ENCODE measurements at regions of chr7 and their contacts with region 1.

Region 1: DNA sequence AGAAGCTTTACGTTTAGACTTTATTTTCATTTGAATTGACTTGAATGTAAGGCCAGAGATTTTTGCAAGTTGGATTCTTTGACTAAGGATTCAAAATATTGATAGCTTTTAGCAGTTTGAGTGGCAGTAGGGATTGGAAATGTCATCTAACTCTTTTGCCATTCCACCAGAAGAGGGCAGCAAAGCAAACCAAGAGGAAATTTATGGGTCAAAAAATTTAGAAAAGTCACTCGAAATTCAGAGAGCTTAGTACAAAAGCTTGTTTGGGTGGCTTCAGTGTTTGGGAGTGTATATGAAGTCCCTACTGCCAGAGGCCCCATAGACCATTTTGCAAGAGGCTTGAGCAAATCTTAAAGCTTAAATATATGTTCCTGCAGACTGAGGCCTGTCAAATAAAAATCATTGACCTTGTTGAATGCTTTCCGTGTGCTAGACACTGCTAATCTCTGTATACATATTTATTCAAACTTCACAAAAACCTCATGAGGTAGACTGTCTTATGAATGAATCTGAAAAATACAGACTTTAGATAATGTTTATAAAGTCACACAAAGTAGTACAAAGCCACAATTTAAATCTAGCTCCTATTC is 44.6 kb upstream of the RSBN1L start:
- DNase-seq: peak; percentile 61
- H3K4me3 Mint-ChIP-seq: no peak overlapping the region
- H3K27ac Mint-ChIP-seq: no peak overlapping the region
- H3K4me1 Mint-ChIP-seq: no peaks in the 10 kb centered on the region
- H3K27me3 Mint-ChIP-seq: no peaks in the 10 kb centered on the region
- CTCF ChIP-seq: peak; percentile 66

Region 2: DNA sequence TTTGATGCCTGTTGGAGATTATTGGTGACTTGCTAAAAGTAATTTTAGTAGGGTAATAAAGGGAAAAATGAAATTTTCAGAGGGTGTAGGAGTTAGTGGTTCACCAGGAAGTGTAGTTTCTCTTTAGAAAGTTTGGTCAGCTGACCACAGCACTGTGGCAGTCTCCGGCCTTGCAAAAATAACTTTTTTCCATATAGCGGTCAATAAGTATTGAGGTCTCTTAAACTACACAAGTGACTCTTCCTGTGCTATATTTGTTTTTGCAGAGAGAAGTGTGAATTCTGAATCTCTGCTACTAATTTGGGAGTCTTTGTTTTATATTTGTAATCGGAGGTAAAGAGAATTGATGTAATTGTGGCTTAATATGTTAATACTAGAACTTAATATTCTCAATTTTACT is 90.3 kb before region 1 on chr7:
- CTCF ChIA-PET with region 1: no interaction called
- POLR2A ChIA-PET with region 1: no interaction called
- intact Hi-C with region 1: no loop called
- DNase-seq: no peak
- H3K4me3 Mint-ChIP-seq: no peak overlapping the region
- H3K27ac Mint-ChIP-seq: peak overlapping the region; percentile 51
- H3K4me1 Mint-ChIP-seq: peaks cover 40% of the 10 kb centered on the region
- H3K27me3 Mint-ChIP-seq: no peaks in the 10 kb centered on the region
- CTCF ChIP-seq: no peak

Region 3: DNA sequence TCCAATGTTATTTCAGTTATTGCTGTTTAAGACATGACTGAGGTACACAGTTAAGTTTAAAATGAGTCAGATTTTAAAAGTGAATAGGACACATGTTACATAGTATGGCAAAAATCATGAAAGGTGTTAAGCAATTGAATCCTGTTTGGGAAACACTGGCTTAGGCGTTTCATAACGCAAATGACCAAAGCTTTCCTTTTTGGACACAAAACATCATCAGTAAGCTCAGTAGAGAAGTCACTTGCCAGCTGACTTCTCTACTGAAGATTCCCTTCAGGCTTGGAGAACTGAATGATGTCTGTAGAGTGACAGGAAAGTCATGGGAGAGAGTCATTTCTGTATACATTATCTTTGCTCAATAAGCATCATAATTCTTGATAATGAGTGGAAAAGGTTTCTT is 19.8 kb before region 1 on chr7:
- CTCF ChIA-PET with region 1: interaction called, 32 read pairs
- POLR2A ChIA-PET with region 1: no interaction called
- intact Hi-C with region 1: no loop called
- DNase-seq: peak; percentile 13
- H3K4me3 Mint-ChIP-seq: no peak overlapping the region
- H3K27ac Mint-ChIP-seq: no peak overlapping the region
- H3K4me1 Mint-ChIP-seq: no peaks in the 10 kb centered on the region
- H3K27me3 Mint-ChIP-seq: no peaks in the 10 kb centered on the region
- CTCF ChIP-seq: no peak

Region 4: DNA sequence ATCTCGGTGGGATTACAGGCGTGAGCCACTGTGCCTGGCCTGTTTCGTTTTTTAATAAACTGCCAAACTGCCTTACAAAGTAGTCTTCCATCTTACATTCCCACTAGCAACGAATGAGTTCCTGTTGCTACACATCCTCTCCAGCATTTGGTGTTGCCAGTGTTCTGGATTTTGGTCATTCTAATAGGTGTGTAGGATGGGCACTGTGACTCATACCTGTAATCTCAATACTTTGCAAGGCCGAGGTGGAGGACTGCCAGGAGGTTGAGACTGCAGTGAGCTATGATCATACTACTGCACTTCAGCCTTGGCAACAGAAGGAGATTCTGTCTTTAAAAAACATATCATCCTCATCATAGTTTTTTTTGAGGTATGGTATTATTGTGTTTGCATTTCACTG is 23.2 kb after region 1 on chr7:
- CTCF ChIA-PET with region 1: interaction called, 18 read pairs
- POLR2A ChIA-PET with region 1: no interaction called
- intact Hi-C with region 1: no loop called
- DNase-seq: peak; percentile 93
- H3K4me3 Mint-ChIP-seq: no peak overlapping the region
- H3K27ac Mint-ChIP-seq: no peak overlapping the region
- H3K4me1 Mint-ChIP-seq: peaks cover 9% of the 10 kb centered on the region
- H3K27me3 Mint-ChIP-seq: no peaks in the 10 kb centered on the region
- CTCF ChIP-seq: no peak

Region 5: GRCh38 chr7:77696198-77697028 is 44.7 kb after region 1 on chr7 and contains the start of gene RSBN1L:
- CTCF ChIA-PET with region 1: interaction called, 20 read pairs
- POLR2A ChIA-PET with region 1: interaction called, 22 read pairs
- intact Hi-C with region 1: no loop called
- DNase-seq: peak; percentile 98
- H3K4me3 Mint-ChIP-seq: peak within 1 kb of the TSS; percentile 98
- H3K27ac Mint-ChIP-seq: peak within 1 kb of the TSS; percentile 95
- H3K4me1 Mint-ChIP-seq: peaks cover 24% of the 10 kb centered on the region
- H3K27me3 Mint-ChIP-seq: no peaks in the 10 kb centered on the region
- CTCF ChIP-seq: no peak
- total RNA-seq, gene RSBN1L: 10.9 and 12.1 TPM in 2 replicates

Region 6: GRCh38 chr7:77759294-77759889 is 107.7 kb after region 1 on chr7:
- CTCF ChIA-PET with region 1: interaction called, 196 read pairs
- POLR2A ChIA-PET with region 1: interaction called, 10 read pairs
- intact Hi-C with region 1: loop called (anchors 1 kb)
- DNase-seq: peak; percentile 78
- H3K4me3 Mint-ChIP-seq: no peak overlapping the region
- H3K27ac Mint-ChIP-seq: peak overlapping the region; percentile 13
- H3K4me1 Mint-ChIP-seq: peaks cover 6% of the 10 kb centered on the region
- H3K27me3 Mint-ChIP-seq: no peaks in the 10 kb centered on the region
- CTCF ChIP-seq: peak; percentile 78

Region 7: DNA sequence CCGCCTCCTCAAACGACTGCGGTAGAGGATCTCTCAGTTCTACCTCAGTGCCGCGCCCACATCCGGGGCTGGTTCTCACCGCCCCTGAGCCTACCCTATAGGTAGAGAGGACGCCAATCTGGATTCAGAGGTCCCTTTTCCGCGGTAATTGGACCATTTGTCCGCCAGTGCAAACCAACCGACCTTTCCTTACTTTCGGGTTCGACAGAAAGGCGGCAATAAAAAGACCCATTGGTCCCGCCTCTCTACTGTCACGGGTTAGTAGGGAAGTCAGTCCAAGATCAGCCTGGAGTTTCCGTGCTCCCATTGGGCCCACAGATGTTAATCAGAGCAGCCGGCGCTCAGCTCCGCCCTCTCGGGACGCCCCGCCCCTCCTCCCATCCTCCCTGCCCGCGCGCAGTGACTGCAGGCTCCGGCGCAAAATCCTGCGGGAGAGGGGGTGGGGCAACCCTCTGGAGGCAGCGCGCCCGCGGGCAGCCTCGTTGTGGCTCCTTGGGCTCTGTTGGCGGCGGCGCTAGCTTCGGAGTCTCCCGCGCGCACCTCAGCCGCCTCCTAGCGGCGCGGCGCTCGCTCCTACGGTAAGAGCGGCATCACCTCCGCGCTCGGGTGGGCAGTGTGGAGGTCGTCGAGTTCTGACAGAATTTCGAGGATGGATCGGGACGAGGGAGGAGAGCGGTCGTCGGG is 146.9 kb after region 1 on chr7 and contains the starts of genes PHTF2 and TMEM60:
- CTCF ChIA-PET with region 1: interaction called, 14 read pairs
- POLR2A ChIA-PET with region 1: interaction called, 4 read pairs
- intact Hi-C with region 1: no loop called
- DNase-seq: peak; percentile 100
- H3K4me3 Mint-ChIP-seq: peak within 1 kb of the TSS; percentile 96
- H3K27ac Mint-ChIP-seq: peak within 1 kb of the TSS; percentile 94
- H3K4me1 Mint-ChIP-seq: peaks cover 21% of the 10 kb centered on the region
- H3K27me3 Mint-ChIP-seq: no peaks in the 10 kb centered on the region
- CTCF ChIP-seq: peak; percentile 65
- total RNA-seq, gene PHTF2: 12.6 and 16.0 TPM in 2 replicates
- total RNA-seq, gene TMEM60: 7.1 and 11.6 TPM in 2 replicates

Region 8: DNA sequence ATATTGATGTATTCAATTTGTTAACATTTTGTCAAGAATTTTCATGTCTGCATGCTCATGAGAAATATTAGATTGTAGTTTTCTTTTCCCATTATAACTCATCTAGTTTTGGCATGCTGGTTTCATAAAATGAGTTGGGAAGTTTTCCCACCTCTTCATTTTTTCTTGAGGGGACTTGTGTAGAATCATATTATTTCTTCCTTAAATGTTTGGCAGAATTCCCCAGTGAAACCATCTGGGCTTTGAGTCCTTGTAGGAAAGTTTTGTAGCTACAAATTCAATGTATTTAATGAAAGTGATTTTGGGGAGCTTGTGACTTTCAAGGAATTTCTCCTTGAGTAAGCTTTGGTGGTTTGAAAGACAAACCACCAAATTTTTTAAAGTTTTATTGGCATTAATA is 320.1 kb after region 1 on chr7:
- CTCF ChIA-PET with region 1: no interaction called
- POLR2A ChIA-PET with region 1: no interaction called
- intact Hi-C with region 1: no loop called
- DNase-seq: no peak
- H3K4me3 Mint-ChIP-seq: no peak overlapping the region
- H3K27ac Mint-ChIP-seq: no peak overlapping the region
- H3K4me1 Mint-ChIP-seq: no peaks in the 10 kb centered on the region
- H3K27me3 Mint-ChIP-seq: no peaks in the 10 kb centered on the region
- CTCF ChIP-seq: no peak

Measured in MCF 10A (cell line).